PC-9 (cell line): ENCODE measurements at regions of chr11 and their contacts with region 1.

Region 1: DNA sequence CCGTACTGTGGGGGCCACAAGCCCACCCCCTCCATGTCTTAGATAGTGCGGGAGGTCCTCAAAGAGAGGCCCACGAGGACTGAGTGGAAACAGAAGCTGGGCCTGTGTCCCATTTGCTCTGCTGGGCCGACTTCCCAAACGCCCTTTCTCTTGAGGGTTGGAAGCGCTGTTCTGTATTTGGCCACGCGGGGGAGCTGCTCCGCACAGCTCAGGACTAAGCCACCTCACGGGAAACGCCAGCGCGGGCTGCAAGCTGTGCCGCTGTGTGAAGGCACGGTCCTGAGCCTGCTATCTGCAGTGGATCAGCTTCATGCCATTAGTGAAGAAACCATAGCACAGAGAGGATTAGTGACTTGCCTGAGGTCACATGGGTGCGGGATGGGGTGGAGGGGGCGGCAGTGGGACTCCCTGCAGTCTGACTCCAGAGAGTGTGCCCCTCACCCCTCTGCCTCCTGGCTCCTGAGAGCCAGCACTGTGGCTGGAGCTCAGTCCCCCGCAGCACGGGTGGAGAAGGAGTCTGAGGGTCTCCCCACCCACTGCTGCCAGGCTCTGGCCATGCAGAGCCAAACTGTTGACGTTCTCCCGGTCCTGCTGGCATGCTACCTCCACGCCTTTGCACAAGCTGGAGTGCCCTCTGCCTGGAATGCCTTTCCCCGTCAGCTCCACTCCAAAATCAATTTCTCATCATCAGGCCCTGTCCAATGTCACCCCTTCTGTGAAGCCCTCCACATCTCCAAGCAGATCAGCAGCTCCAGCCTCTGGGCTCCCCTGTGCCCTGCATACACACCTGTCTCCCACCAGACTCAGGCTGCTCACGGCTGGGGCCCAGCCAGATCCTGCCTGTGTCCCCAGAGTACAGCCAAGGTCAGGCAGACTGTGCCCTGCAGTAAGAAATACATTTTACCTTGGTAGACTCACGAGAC is 51.5 kb upstream of the LRRC32 start:
- DNase-seq: peak; percentile 58 to 77
- H3K4me3 ChIP-seq: no peak overlapping the region; the same call in 1 of the 2 replicates
- H3K27ac ChIP-seq: no peak overlapping the region
- H3K4me1 ChIP-seq: no peaks in the 10 kb centered on the region
- H3K27me3 ChIP-seq: no peaks in the 10 kb centered on the region
- CTCF ChIP-seq: peak; percentile 95

Region 2: DNA sequence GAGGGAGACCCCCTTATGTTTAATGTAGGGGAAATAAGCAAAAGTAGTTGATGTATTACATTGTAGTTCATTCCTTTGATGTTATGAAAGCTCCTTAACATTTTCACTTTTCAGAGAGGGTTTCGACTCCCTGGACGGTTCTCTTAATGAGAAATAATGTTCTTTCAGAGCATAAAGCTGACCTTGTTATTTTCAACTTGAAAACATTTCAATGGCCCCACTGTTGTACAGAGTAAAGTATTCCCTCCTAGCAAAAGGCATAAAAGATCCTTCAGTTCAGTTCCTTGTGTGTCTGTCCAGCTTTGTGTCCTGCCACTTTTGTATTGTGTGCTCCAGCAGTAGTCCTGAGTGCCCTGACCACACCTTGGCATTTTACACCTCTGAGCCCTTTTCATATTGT is 843.1 kb before region 1 on chr11:
- CTCF ChIA-PET with region 1: interaction called, 6 read pairs
- POLR2A ChIA-PET with region 1: interaction called, 28 read pairs
- intact Hi-C with region 1: no loop called
- DNase-seq: no peak
- H3K4me3 ChIP-seq: no peak overlapping the region
- H3K27ac ChIP-seq: no peak overlapping the region
- H3K4me1 ChIP-seq: no peaks in the 10 kb centered on the region
- H3K27me3 ChIP-seq: no peaks in the 10 kb centered on the region
- CTCF ChIP-seq: no peak

Region 3: GRCh38 chr11:76607431-76607830 is 114.6 kb before region 1 on chr11:
- CTCF ChIA-PET with region 1: interaction called, 16 read pairs
- POLR2A ChIA-PET with region 1: no interaction called
- intact Hi-C with region 1: no loop called
- DNase-seq: no peak
- H3K4me3 ChIP-seq: no peak overlapping the region
- H3K27ac ChIP-seq: no peak overlapping the region
- H3K4me1 ChIP-seq: no peaks in the 10 kb centered on the region
- H3K27me3 ChIP-seq: no peaks in the 10 kb centered on the region; the same call in 1 of the 2 replicates
- CTCF ChIP-seq: no peak

Region 4: GRCh38 chr11:76752321-76753185 is 30.5 kb after region 1 on chr11:
- CTCF ChIA-PET with region 1: interaction called, 16 read pairs
- POLR2A ChIA-PET with region 1: no interaction called
- intact Hi-C with region 1: no loop called
- DNase-seq: peak in 1 of 2 experiments; percentile 73
- H3K4me3 ChIP-seq: no peak overlapping the region
- H3K27ac ChIP-seq: no peak overlapping the region
- H3K4me1 ChIP-seq: no peaks in the 10 kb centered on the region
- H3K27me3 ChIP-seq: no peaks in the 10 kb centered on the region
- CTCF ChIP-seq: no peak

Region 5: GRCh38 chr11:77107950-77108349 is 385.9 kb after region 1 on chr11:
- CTCF ChIA-PET with region 1: no interaction called
- POLR2A ChIA-PET with region 1: interaction called, 10 read pairs
- intact Hi-C with region 1: no loop called
- DNase-seq: peak; percentile 76 to 83
- H3K4me3 ChIP-seq: no peak overlapping the region
- H3K27ac ChIP-seq: no peak overlapping the region
- H3K4me1 ChIP-seq: peaks cover 26% of the 10 kb centered on the region
- H3K27me3 ChIP-seq: no peaks in the 10 kb centered on the region
- CTCF ChIP-seq: no peak